Mammary epithelial cell (primary cell): ENCODE measurements at regions of chr9 and their contacts with region 1.

Region 1: GRCh38 chr9:135850737-135851136 is 56.6 kb downstream of the CAMSAP1 start:
- DNase-seq: no peak
- H3K4me3 ChIP-seq: no peak overlapping the region
- H3K27ac ChIP-seq: no peak overlapping the region
- H3K4me1 ChIP-seq: peaks cover 6% of the 10 kb centered on the region
- H3K27me3 ChIP-seq: no peaks in the 10 kb centered on the region
- CTCF ChIP-seq: no peak

Region 2: DNA sequence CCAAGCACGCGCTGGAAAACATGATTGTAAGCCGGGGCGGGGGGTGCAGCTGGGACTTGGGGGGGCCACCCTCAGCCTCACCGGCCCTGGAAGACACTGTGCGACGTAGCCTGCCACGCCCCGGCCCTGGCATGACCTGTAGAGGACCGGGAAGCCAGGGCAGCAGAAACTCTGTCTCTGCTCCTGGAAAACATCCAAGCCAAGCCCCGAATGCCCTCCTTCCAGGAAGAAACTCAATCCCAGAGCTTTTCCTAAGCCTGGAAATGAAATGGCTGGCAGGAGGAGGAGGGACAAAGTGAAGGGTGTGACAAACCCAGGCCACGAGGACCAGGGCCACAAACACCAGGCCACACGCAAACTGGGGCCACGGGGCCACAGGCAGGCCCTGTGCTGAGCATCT is 93.4 kb before region 1 on chr9:
- CTCF ChIA-PET with region 1: no interaction called
- dilution Hi-C with region 1: no loop called
- in situ Hi-C with region 1: no loop called
- intact Hi-C with region 1: no loop called
- DNase-seq: no peak
- H3K4me3 ChIP-seq: no peak overlapping the region
- H3K27ac ChIP-seq: no peak overlapping the region
- H3K4me1 ChIP-seq: no peaks in the 10 kb centered on the region
- H3K27me3 ChIP-seq: no peaks in the 10 kb centered on the region
- CTCF ChIP-seq: no peak

Region 3: GRCh38 chr9:135864447-135865049 is 13.8 kb after region 1 on chr9:
- CTCF ChIA-PET with region 1: no interaction called
- dilution Hi-C with region 1: no loop called
- in situ Hi-C with region 1: no loop called
- intact Hi-C with region 1: no loop called
- DNase-seq: no peak
- H3K4me3 ChIP-seq: no peak overlapping the region
- H3K27ac ChIP-seq: no peak overlapping the region
- H3K4me1 ChIP-seq: no peaks in the 10 kb centered on the region
- H3K27me3 ChIP-seq: no peaks in the 10 kb centered on the region
- CTCF ChIP-seq: peak; percentile 92 to 95

Region 4: DNA sequence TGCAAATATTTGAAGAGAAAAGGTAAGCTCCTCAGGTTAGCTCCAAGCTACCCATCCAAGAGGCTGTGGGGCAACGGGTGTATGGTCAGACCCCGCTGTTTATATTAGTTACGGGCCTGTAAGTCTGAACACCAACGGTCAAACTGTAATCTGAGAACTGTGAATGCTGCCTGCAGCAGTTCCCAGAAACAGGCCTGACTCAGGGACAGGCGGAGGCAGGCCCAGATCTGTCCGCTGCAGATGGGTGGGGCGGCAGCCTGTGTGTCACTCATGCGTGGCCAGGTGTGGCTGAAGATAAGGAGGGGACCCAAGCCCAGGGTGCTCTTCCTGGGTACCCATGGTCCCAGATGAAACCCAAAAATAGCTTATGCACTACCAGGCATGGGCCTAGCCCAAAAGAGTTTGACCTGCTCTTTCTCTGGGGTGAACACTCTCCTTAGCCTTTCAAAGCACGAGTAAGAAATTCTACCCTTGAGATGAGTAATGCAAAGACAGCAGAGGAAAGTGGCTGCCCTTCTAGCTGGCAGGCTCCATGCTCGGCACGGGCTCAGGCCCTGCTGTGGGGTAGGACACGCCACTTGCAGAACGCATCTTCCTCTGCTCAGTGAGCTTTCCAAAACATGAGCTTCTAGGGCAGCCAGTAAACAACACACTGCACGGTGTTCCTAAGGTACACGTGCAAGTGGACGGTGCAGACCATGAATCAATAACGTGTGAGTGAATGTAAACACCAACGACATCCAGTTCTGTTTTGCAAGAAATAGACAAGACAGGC is 101.3 kb after region 1 on chr9:
- CTCF ChIA-PET with region 1: no interaction called
- dilution Hi-C with region 1: loop called (anchors 5 kb)
- in situ Hi-C with region 1: no loop called
- intact Hi-C with region 1: no loop called
- DNase-seq: peak; percentile 96
- H3K4me3 ChIP-seq: no peak overlapping the region
- H3K27ac ChIP-seq: peak overlapping the region; percentile 83
- H3K4me1 ChIP-seq: peaks cover 30% of the 10 kb centered on the region
- H3K27me3 ChIP-seq: no peaks in the 10 kb centered on the region
- CTCF ChIP-seq: no peak